ENCODE measurements at regions of chr5 and their contacts with region 1.

Region 1: GRCh38 chr5:168494057-168494555 is 7.8 kb downstream of the RARS1 start:
- DNase-seq: no peak
- H3K4me3 ChIP-seq: no peak overlapping the region
- H3K27ac ChIP-seq: no peak overlapping the region
- H3K4me1 ChIP-seq: no peaks in the 10 kb centered on the region
- H3K27me3 ChIP-seq: no peaks in the 10 kb centered on the region
- CTCF ChIP-seq: no peak
- EP300 ChIP-seq: no peak
- POLR2A ChIP-seq: no peak

Region 2: GRCh38 chr5:168347071-168347767 is 146.9 kb before region 1 on chr5:
- intact Hi-C with region 1: no loop called
- DNase-seq: no peak
- H3K4me3 ChIP-seq: no peak overlapping the region
- H3K27ac ChIP-seq: no peak overlapping the region
- H3K4me1 ChIP-seq: no peaks in the 10 kb centered on the region
- H3K27me3 ChIP-seq: no peaks in the 10 kb centered on the region
- CTCF ChIP-seq: no peak
- EP300 ChIP-seq: no peak
- POLR2A ChIP-seq: no peak

Region 3: GRCh38 chr5:168513861-168514428 is 19.8 kb after region 1 on chr5:
- intact Hi-C with region 1: loop called in 1 of 4 experiments (anchors 1 kb)
- DNase-seq: no peak
- H3K4me3 ChIP-seq: no peak overlapping the region
- H3K27ac ChIP-seq: no peak overlapping the region
- H3K4me1 ChIP-seq: no peaks in the 10 kb centered on the region
- H3K27me3 ChIP-seq: no peaks in the 10 kb centered on the region
- CTCF ChIP-seq: no peak
- EP300 ChIP-seq: no peak
- POLR2A ChIP-seq: no peak

Region 4: GRCh38 chr5:168962306-168962705 is 468.2 kb after region 1 on chr5:
- intact Hi-C with region 1: no loop called
- DNase-seq: no peak
- H3K4me3 ChIP-seq: no peak overlapping the region
- H3K27ac ChIP-seq: no peak overlapping the region
- H3K4me1 ChIP-seq: no peaks in the 10 kb centered on the region
- H3K27me3 ChIP-seq: no peaks in the 10 kb centered on the region
- CTCF ChIP-seq: no peak
- EP300 ChIP-seq: no peak
- POLR2A ChIP-seq: no peak

Measured in ovary (tissue), 10 donors.